ENCODE measurements at regions of chr3 and their contacts with region 1.

Region 1: DNA sequence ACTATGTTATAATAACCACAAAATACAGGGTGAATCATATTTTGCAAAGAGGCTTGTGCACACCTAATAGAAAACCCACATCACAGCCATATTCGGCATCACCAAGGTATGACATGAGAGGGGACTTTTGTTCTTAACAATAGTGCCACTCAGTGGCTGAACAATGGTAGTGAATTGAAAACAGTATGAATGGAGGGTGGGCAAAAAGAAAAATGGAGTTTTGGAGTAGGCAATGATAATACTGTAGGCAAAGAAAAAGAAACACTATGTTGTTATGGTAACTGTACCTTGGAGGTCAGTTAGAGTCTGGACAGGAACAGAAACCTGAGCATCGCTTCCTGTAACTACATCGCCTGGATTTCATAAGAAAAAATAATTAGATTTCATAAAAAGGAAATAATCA is 348.6 kb downstream of the PLCL2 start:
- DNase-seq: peak in 21 of 42 donors; percentile 6 to 73 (median 39)

Region 2: DNA sequence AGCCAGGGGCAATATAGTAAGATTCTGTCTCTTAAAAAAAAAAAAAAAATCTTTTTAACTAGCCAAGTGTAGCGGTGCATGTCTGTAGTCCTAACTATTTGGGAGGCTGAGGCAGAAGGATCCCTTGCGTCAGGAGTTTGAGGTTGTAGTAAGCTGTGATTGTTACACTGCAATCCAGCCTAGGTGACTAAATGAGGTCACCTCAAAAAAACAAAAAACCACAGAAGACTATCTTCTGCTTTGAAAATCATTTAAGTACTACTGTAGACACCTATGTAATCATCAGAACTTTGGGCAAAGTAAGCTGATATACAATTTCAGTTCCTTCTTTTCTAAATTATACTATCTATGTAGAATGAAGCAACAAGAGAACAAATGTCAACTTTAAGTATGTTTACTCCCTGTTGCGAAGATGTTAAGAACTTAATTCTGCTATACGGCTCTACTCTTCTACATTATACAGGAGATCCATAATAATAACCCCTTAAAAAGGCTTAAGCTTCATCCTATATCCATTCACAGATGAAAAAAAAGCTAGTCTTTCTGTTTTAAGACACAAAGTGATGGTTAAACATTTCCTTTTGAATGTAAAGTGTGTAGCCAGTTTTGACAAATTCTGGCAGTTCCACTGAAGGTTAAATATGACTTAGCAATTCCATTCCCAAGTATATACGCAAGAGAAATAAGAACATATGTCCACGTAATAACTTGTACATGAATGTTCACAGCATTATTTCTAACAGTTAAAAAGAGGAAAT is 643.4 kb before region 1 on chr3:
- intact Hi-C with region 1: loop called (anchors 10 kb)
- DNase-seq: no peak

Measured in head of caudate nucleus (tissue), 42 donors.